PC-3 (cell line): ENCODE measurements at regions of chr2 and their contacts with region 1.

Region 1: DNA sequence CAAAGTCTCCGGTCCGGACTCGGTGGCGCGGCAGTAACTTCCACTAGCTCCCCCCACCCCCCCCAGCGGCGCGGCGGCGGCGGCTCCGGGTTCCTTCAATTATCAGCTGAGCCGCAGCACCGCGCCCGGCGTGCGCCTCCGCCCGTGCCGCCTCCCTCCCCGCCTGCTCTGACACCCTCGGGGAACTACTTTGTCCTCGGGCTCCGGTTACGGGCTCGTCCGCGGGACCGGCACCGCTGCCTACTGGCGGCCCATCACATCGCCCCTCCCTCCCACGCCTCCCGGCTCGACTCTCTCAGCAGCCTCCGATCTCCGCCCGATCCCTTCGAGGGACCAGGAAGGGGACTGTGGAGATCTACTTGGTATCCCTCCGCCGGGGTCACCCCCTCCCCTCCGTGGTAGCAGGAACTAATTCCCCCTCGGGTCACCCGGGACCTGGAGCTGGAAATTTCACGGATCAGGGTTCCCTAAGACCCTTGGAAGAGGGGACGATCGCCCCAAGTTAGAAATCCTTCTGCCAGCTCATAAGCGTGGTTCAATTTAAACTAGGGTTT is at the start of gene TRIP12:
- DNase-seq: peak; percentile 86
- ATAC-seq: peak; percentile 77
- H3K4me3 ChIP-seq: peak within 1 kb of the TSS; percentile 98
- H3K27ac ChIP-seq: peak within 1 kb of the TSS; percentile 86
- H3K4me1 ChIP-seq: peaks cover 19% of the 10 kb centered on the region
- H3K27me3 ChIP-seq: no peaks in the 10 kb centered on the region
- CTCF ChIP-seq: no peak
- total RNA-seq, gene TRIP12: 113 and 147 TPM in 2 replicates

Region 2: GRCh38 chr2:229660951-229661350 is 261.0 kb before region 1 on chr2:
- CTCF ChIA-PET with region 1: no interaction called
- POLR2A ChIA-PET with region 1: no interaction called
- intact Hi-C with region 1: no loop called
- DNase-seq: peak; percentile 74
- ATAC-seq: peak; percentile 80
- H3K4me3 ChIP-seq: no peak overlapping the region
- H3K27ac ChIP-seq: peak overlapping the region; percentile 89
- H3K4me1 ChIP-seq: peaks cover 20% of the 10 kb centered on the region
- H3K27me3 ChIP-seq: no peaks in the 10 kb centered on the region
- CTCF ChIP-seq: no peak

Region 3: DNA sequence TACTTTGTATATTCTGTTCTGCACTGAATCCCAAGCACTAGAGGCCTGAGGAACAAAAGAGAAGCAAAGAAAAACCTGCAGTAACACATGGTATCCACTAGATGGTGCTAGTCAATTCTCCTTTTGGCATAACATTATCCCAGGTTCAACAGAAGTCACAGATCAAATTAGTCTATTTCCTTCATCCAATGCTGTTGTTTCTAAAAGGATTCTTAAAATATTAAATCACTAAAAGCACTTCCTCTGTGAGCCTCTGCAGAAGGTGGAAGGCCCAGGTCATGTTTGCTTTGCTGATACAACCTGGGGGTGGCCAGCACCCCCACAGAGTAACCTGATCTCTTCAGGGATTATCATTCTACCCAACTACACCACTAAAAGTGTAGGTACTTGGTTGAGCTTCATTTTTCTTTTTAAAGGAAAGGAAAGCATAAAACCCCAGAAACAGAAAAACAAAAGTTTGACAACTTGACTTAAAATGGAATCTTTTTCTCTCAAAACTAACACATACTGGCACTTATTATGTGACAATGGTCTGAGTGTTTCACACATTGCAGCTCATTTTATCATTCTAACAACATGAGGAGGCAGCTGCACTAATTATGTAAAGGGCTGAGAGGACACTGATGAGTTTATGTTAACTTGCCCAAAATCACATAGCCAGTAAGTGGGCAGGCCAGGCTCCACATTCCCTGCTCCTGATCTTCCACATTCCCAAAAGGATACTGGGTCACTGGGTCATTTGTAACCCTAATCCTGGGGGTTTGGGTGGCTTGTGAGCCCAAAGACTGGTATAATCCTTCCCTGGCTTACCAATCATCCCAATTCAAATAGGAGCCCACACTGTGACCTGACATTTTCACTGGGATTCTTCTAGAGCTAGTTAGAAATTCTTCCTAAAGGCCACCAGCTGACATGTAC is 140.9 kb before region 1 on chr2:
- CTCF ChIA-PET with region 1: interaction called, 4 read pairs
- POLR2A ChIA-PET with region 1: no interaction called
- intact Hi-C with region 1: loop called (anchors 5 kb)
- DNase-seq: peak; percentile 59
- ATAC-seq: peak; percentile 89
- H3K4me3 ChIP-seq: no peak overlapping the region
- H3K27ac ChIP-seq: no peak overlapping the region
- H3K4me1 ChIP-seq: peaks cover 11% of the 10 kb centered on the region
- H3K27me3 ChIP-seq: no peaks in the 10 kb centered on the region
- CTCF ChIP-seq: peak; percentile 90

Region 4: DNA sequence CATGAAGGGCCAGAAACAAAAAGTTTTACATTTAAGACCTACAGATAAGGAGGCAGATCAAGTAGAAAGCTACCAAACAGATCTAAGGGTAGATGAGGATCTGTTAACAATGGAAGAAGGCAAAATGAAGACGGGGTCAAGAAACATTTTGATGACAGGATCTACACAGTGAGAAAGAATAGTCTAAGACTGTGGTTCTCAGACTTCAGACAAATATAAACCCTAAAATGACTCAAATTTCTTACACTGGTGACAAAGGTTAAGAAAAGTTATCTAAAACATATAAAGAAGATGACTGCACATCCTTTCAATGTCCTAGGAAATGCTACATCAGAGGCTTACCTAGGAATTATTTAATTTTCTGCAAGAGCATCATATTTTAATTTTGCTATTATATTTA is 34.5 kb before region 1 on chr2:
- CTCF ChIA-PET with region 1: no interaction called
- POLR2A ChIA-PET with region 1: no interaction called
- intact Hi-C with region 1: no loop called
- DNase-seq: no peak
- ATAC-seq: no peak
- H3K4me3 ChIP-seq: no peak overlapping the region
- H3K27ac ChIP-seq: no peak overlapping the region
- H3K4me1 ChIP-seq: peaks cover 11% of the 10 kb centered on the region
- H3K27me3 ChIP-seq: no peaks in the 10 kb centered on the region
- CTCF ChIP-seq: no peak

Region 5: GRCh38 chr2:229943770-229944449 is 21.9 kb after region 1 on chr2:
- CTCF ChIA-PET with region 1: no interaction called
- POLR2A ChIA-PET with region 1: no interaction called
- intact Hi-C with region 1: no loop called
- DNase-seq: no peak
- ATAC-seq: no peak
- H3K4me3 ChIP-seq: no peak overlapping the region
- H3K27ac ChIP-seq: no peak overlapping the region
- H3K4me1 ChIP-seq: no peaks in the 10 kb centered on the region
- H3K27me3 ChIP-seq: no peaks in the 10 kb centered on the region
- CTCF ChIP-seq: no peak